Activated CD8-positive, alpha-beta T cell treated with anti-CD3 and anti-CD28 coated beads for 36 hours (primary cell): ENCODE measurements at regions of chr2 and their contacts with region 1.

Region 1: GRCh38 chr2:102442967-102443828 is 20.2 kb downstream of the IL18RAP start:
- DNase-seq: peak; percentile 71
- ATAC-seq: peak; percentile 79
- H3K4me3 Mint-ChIP-seq: no peak overlapping the region
- H3K27ac Mint-ChIP-seq: peak overlapping the region; percentile 37
- H3K4me1 Mint-ChIP-seq: peaks cover 9% of the 10 kb centered on the region
- H3K27me3 Mint-ChIP-seq: no peaks in the 10 kb centered on the region
- CTCF ChIP-seq: peak; percentile 87

Region 2: DNA sequence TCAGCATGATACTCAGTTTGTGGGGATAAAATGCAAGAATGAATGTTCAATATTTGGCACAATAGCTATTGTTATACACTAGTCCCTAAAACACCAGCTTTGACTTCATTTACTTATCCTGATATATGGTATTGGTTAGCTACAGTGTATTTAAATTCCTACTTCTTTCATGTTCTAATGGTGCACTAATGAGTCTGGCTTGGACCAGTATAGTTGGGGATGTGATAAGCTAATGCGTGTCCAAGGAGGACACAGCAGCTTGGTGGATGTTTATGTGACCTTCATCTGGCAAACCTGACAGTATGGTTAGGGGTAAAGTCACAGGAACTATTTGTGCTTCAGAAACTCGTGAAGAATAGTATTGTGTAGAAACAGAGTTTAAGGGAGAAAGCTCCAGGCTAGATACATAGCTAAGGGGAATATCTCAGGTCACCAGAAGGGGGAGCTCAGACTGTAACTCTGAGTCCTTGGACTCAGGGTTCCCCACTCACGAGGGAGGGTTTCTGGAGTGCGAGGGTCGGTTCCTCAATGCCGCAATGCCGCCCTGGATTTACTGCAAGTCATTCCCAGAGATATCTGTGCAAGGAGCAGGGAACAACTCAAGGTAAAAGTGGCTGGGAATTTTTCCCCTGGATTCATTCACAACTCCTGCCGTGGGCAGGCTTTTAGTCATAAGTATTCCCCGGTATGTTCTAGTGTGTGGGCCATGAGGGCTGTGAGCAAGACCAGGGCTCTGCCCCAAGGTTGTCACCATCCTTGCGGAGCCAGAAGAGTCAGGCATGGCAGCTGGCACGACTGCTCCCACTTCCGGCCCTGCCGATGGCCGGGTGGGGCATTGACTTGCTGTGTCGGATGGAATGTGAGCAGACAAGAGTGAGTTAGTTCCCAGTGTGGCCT is 437.0 kb before region 1 on chr2:
- CTCF ChIA-PET with region 1: interaction called, 17 read pairs
- POLR2A ChIA-PET with region 1: no interaction called
- intact Hi-C with region 1: loop called (anchors 5 kb)
- DNase-seq: peak; percentile 54
- ATAC-seq: peak; percentile 65
- H3K4me3 Mint-ChIP-seq: no peak overlapping the region
- H3K27ac Mint-ChIP-seq: no peak overlapping the region
- H3K4me1 Mint-ChIP-seq: peaks cover 14% of the 10 kb centered on the region
- H3K27me3 Mint-ChIP-seq: no peaks in the 10 kb centered on the region
- CTCF ChIP-seq: peak; percentile 64

Region 3: GRCh38 chr2:102235491-102235890 is 207.7 kb before region 1 on chr2:
- CTCF ChIA-PET with region 1: interaction called, 68 read pairs
- POLR2A ChIA-PET with region 1: no interaction called
- intact Hi-C with region 1: no loop called
- DNase-seq: peak; percentile 46
- ATAC-seq: no peak
- H3K4me3 Mint-ChIP-seq: no peak overlapping the region
- H3K27ac Mint-ChIP-seq: no peak overlapping the region
- H3K4me1 Mint-ChIP-seq: peaks cover 49% of the 10 kb centered on the region
- H3K27me3 Mint-ChIP-seq: no peaks in the 10 kb centered on the region
- CTCF ChIP-seq: peak; percentile 20

Region 4: DNA sequence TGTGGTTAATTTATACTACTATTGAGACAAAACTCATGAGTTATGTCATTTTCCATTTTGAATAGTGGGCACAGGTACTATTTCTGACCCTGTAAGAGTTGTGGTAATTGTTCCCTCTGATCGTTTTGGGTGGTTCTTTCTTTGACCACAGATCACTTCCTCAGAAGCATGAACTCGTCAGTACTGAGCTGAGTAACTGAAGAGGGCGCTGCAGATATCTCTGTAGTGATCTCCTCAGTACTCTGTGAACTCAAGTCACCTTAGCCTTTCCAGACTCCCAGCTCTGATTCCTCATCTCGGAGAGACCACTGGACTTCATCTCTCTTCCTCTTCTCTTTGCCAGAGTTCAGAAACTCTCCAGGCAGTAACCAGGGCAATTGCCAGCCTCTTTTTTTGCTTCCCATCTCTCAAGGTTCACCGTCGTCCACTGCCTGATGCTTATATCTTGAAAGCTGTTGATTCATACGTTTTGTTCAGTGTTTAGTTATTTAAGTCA is 141.3 kb before region 1 on chr2:
- CTCF ChIA-PET with region 1: interaction called, 18 read pairs
- POLR2A ChIA-PET with region 1: interaction called, 4 read pairs
- intact Hi-C with region 1: no loop called
- DNase-seq: peak; percentile 83
- ATAC-seq: peak; percentile 91
- H3K4me3 Mint-ChIP-seq: peak overlapping the region; percentile 56
- H3K27ac Mint-ChIP-seq: peak overlapping the region; percentile 86
- H3K4me1 Mint-ChIP-seq: peaks cover 52% of the 10 kb centered on the region
- H3K27me3 Mint-ChIP-seq: no peaks in the 10 kb centered on the region
- CTCF ChIP-seq: no peak

Region 5: DNA sequence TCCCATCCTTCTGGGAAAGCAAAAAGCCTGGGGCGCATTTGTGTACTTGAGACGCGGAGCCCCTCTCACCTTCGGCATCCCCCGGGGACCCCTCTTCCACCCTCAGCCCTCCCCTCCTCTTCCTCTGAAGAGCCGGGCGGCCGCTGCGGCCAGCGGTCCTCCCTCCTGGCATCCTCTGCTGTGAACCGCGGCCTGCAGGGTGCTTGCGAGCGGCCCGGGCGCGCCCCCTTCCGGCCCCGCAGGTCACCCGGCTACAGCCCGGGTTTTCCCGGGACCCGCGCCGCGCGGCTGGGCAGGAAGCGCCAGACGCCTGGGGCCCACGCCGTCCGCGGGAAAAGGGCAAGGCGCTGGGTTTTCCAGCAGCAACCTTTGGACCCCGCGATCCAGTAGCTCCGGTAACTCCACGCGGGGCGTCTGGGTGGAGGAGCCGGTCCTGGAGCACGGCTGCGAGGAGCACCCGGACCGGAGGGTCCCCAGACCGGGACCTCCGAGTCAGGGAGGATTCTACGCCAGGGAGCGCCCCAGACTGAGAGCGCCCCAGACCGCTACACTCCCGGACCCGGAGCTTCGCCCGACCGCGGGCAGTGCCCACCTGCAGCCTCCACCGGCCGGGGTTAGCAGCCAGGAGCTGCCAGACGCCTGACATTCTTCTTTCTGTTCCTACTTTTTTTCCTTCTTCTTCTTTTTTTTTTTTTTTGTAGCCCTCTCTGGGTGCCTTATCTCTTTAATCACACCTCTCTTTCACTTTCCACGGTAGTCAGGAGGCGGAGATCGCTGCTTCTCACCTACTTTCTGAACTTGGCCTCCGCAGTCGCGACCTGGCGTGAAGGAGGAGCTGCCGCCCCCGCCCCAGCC is 87.4 kb before region 1 on chr2 and contains the start of gene IL18R1:
- CTCF ChIA-PET with region 1: interaction called, 23 read pairs
- POLR2A ChIA-PET with region 1: interaction called, 5 read pairs
- intact Hi-C with region 1: loop called (anchors 2 kb)
- DNase-seq: peak; percentile 81
- ATAC-seq: peak; percentile 82
- H3K4me3 Mint-ChIP-seq: peak within 1 kb of the TSS; percentile 96
- H3K27ac Mint-ChIP-seq: peak within 1 kb of the TSS; percentile 98
- H3K4me1 Mint-ChIP-seq: peaks cover 36% of the 10 kb centered on the region
- H3K27me3 Mint-ChIP-seq: no peaks in the 10 kb centered on the region
- CTCF ChIP-seq: peak; percentile 84
- total RNA-seq, gene IL18R1: 15.0 to 15.8 TPM

Region 6: DNA sequence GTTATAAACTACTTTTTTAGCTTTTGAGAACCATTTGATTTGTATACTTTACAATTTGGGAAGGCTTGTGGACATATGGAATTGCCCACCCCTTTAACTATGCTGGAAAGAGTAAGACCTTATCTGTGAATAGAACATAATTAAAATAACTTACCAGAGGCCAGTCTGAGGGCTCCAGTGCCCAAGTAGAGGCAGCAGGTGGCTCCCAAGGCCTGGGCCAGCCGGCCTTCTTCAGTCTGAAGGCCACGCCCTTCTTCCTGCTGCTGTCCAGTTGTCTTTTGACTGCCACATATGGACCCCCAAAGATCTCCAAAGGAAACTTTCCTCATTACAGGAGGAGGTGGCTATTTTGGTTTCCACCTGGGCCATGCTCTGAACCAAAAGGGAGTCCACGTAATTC is 32.2 kb before region 1 on chr2:
- CTCF ChIA-PET with region 1: interaction called, 14 read pairs
- POLR2A ChIA-PET with region 1: no interaction called
- intact Hi-C with region 1: no loop called
- DNase-seq: no peak
- ATAC-seq: no peak
- H3K4me3 Mint-ChIP-seq: no peak overlapping the region
- H3K27ac Mint-ChIP-seq: no peak overlapping the region
- H3K4me1 Mint-ChIP-seq: peaks cover 6% of the 10 kb centered on the region
- H3K27me3 Mint-ChIP-seq: no peaks in the 10 kb centered on the region
- CTCF ChIP-seq: no peak

Region 7: DNA sequence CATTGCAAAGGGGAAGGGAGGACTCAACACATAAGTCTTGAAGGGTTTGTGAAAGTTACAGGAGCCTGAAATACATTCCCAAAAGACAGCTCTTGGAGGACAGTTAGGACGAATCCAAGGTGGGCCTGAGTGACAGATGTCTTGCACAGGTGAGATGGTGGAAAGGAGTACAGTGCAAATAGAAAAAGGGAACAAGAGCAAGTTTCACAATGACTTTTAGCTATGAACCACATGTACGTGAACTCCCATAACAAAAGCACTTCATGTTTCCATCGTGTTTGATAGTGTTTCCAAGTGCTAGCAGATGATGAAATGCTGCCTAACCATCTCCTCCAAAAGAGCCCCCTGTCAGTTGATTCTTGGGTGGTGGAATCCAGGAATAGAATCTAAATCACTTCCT is 18.4 kb before region 1 on chr2:
- CTCF ChIA-PET with region 1: interaction called, 23 read pairs
- POLR2A ChIA-PET with region 1: interaction called, 3 read pairs
- intact Hi-C with region 1: no loop called
- DNase-seq: no peak
- ATAC-seq: peak; percentile 59
- H3K4me3 Mint-ChIP-seq: peak overlapping the region; percentile 9
- H3K27ac Mint-ChIP-seq: peak overlapping the region; percentile 8
- H3K4me1 Mint-ChIP-seq: peaks cover 62% of the 10 kb centered on the region
- H3K27me3 Mint-ChIP-seq: no peaks in the 10 kb centered on the region
- CTCF ChIP-seq: no peak